OCI-LY7 (cell line): ENCODE measurements at regions of chr6 and their contacts with region 1.

Region 1: GRCh38 chr6:132483779-132484679 is 28.9 kb downstream of the STX7 start:
- DNase-seq: peak; percentile 84
- H3K4me3 ChIP-seq: peak overlapping the region; percentile 45
- H3K27ac ChIP-seq: peak overlapping the region; percentile 83
- H3K4me1 ChIP-seq: peaks cover 59% of the 10 kb centered on the region
- CTCF ChIP-seq: peak; percentile 95

Region 2: GRCh38 chr6:131914967-131915751 is 568.9 kb before region 1 on chr6:
- CTCF ChIA-PET with region 1: no interaction called
- POLR2A ChIA-PET with region 1: no interaction called
- intact Hi-C with region 1: loop called (anchors 5 kb)
- DNase-seq: peak; percentile 79
- H3K4me3 ChIP-seq: no peak overlapping the region
- H3K27ac ChIP-seq: no peak overlapping the region
- H3K4me1 ChIP-seq: peaks cover 25% of the 10 kb centered on the region
- CTCF ChIP-seq: peak; percentile 95

Region 3: GRCh38 chr6:132084833-132085509 is 399.1 kb before region 1 on chr6:
- CTCF ChIA-PET with region 1: no interaction called
- POLR2A ChIA-PET with region 1: no interaction called
- intact Hi-C with region 1: no loop called
- DNase-seq: no peak
- H3K4me3 ChIP-seq: no peak overlapping the region
- H3K27ac ChIP-seq: no peak overlapping the region
- H3K4me1 ChIP-seq: peaks cover 14% of the 10 kb centered on the region
- CTCF ChIP-seq: no peak

Region 4: DNA sequence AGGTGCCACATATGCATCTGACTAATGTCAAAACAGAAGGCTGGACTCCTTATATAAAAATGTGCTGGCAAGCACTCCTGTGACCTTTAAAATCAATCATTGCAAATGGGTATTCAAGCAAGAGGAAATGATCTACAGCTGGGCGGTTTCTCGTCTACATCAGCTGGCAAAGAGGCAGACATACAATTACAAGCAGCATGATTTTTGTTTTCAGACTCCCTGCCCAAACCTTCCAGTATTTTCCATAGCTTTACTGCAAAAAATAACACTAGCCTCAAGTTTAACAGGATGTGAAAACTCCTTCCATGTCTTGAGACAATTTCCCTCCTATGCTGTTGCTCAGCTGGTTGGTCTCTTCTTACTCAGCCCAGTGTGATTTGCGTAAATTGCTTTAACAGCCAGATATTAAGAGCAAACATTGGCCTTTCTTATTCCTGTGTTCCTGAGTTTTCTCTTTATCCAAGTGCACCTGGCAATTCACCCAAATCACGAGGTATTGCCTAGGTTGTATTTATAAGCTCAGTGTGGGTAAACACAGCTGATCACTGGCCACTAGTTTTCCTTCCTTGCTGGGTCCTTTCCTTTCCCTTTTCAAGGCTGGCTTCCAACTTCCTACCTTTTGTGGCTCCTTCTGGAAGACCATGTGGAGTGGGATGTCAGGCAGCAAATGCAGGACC is 213.2 kb before region 1 on chr6:
- CTCF ChIA-PET with region 1: interaction called, 3 read pairs
- POLR2A ChIA-PET with region 1: interaction called, 15 read pairs
- intact Hi-C with region 1: no loop called
- DNase-seq: peak; percentile 61
- H3K4me3 ChIP-seq: peak overlapping the region; percentile 13
- H3K27ac ChIP-seq: peak overlapping the region; percentile 100
- H3K4me1 ChIP-seq: peaks cover 81% of the 10 kb centered on the region
- CTCF ChIP-seq: no peak

Region 5: DNA sequence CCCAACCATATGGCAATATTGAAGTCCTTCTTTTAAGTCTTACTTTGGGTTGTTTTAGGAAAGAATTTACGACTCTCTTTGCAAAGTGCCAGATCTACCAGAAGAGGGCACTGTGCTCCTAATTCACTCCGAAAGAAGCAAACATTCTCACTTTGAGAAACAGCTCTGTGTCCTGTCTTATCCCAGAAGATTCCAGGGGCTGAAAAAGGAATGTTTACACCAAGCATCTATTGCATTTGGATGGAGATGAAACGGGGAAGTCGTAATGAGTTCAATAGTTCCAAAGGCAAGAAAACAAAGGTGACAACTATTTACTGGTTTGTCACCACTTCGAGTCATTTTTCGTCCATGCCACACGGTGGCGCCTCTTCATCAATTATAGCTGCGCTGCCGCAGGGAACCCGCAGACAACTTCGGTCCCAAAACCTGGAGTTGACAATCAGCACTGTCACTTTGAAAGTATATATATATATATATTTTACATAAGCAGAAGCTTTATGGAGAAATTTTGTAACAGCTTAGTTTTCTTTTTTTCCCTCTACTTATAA is 204.4 kb before region 1 on chr6:
- CTCF ChIA-PET with region 1: interaction called, 9 read pairs
- POLR2A ChIA-PET with region 1: interaction called, 10 read pairs
- intact Hi-C with region 1: loop called (anchors 1 kb)
- DNase-seq: peak; percentile 88
- H3K4me3 ChIP-seq: peak overlapping the region; percentile 63
- H3K27ac ChIP-seq: peak overlapping the region; percentile 22
- H3K4me1 ChIP-seq: peaks cover 20% of the 10 kb centered on the region
- CTCF ChIP-seq: peak; percentile 100

Region 6: GRCh38 chr6:132333639-132334520 is 150.1 kb before region 1 on chr6:
- CTCF ChIA-PET with region 1: no interaction called
- POLR2A ChIA-PET with region 1: no interaction called
- intact Hi-C with region 1: no loop called
- DNase-seq: no peak
- H3K4me3 ChIP-seq: no peak overlapping the region
- H3K27ac ChIP-seq: no peak overlapping the region
- H3K4me1 ChIP-seq: no peaks in the 10 kb centered on the region
- CTCF ChIP-seq: no peak

Region 7: GRCh38 chr6:132391391-132392271 is 92.4 kb before region 1 on chr6:
- CTCF ChIA-PET with region 1: interaction called, 3 read pairs
- POLR2A ChIA-PET with region 1: no interaction called
- intact Hi-C with region 1: loop called (anchors 2 kb)
- DNase-seq: no peak
- H3K4me3 ChIP-seq: no peak overlapping the region
- H3K27ac ChIP-seq: no peak overlapping the region
- H3K4me1 ChIP-seq: peaks cover 24% of the 10 kb centered on the region
- CTCF ChIP-seq: no peak

Region 8: DNA sequence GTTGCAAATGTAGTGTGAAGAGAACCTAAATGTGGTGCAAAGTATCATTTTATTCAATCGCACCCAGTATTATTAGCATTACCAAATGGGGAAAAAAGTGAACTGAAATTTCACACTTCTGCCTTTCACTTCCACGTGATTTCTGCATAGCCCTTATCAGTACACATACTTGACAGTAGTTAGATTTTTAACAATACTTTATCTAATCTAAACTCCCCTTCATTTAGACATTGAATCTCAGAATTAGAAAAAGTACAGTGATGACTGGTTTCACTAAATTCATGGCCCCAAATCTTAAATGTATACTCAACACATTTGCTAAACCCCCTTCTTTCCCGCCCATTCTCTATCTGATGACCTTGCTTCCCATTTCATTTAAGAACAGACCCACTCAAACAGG is 14.6 kb after region 1 on chr6:
- CTCF ChIA-PET with region 1: interaction called, 4 read pairs
- POLR2A ChIA-PET with region 1: interaction called, 48 read pairs
- intact Hi-C with region 1: no loop called
- DNase-seq: peak; percentile 81
- H3K4me3 ChIP-seq: peak overlapping the region; percentile 24
- H3K27ac ChIP-seq: peak overlapping the region; percentile 100
- H3K4me1 ChIP-seq: peaks cover 90% of the 10 kb centered on the region
- CTCF ChIP-seq: no peak

Region 9: DNA sequence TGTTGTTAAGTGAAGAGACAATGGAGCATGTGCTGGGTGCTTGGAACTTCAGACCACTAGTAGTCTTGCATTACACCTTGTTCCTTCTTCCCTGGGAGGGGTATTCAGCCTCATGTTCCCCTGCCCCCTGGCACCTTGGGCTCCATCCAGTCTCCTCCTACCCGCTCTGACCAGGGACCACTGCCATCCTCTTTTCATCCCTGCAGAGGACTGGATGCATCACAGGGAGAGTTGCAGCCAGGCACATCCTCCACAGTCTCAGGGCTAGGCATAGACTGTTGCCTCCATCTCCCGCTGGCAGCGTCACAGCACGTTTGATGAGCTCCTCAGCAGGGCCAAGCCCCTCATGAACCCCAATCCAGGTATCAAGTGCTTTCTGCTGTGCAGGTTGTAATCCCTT is 67.2 kb after region 1 on chr6:
- CTCF ChIA-PET with region 1: no interaction called
- POLR2A ChIA-PET with region 1: no interaction called
- intact Hi-C with region 1: no loop called
- DNase-seq: no peak
- H3K4me3 ChIP-seq: no peak overlapping the region
- H3K27ac ChIP-seq: no peak overlapping the region
- H3K4me1 ChIP-seq: no peaks in the 10 kb centered on the region
- CTCF ChIP-seq: no peak